Heart left ventricle (tissue), 16 donors: ENCODE measurements at regions of chr16 and their contacts with region 1.

Region 1: GRCh38 chr16:21126518-21126917 is 24.1 kb downstream of the DNAH3 start:
- DNase-seq: no peak
- ATAC-seq: no peak
- H3K4me3 ChIP-seq: no peak overlapping the region
- H3K27ac ChIP-seq: no peak overlapping the region
- H3K4me1 ChIP-seq: no peaks in the 10 kb centered on the region
- H3K27me3 ChIP-seq: no peaks in the 10 kb centered on the region
- CTCF ChIP-seq: no peak
- POLR2A ChIP-seq: no peak

Region 2: GRCh38 chr16:22659933-22660332 is 1533.4 kb after region 1 on chr16:
- intact Hi-C with region 1: loop called in 1 of 10 experiments (anchors 10 kb)
- DNase-seq: no peak
- ATAC-seq: no peak
- H3K4me3 ChIP-seq: no peak overlapping the region
- H3K27ac ChIP-seq: peak overlapping the region in 1 of 12 donors; percentile 33
- H3K4me1 ChIP-seq: no peaks in the 10 kb centered on the region
- H3K27me3 ChIP-seq: peaks cover 0 to 35% (median 4%) of the 10 kb centered on the region in 9 donors
- CTCF ChIP-seq: no peak
- POLR2A ChIP-seq: no peak